ENCODE measurements at regions of chr1 and their contacts with region 1.

Region 1: GRCh38 chr1:11772458-11772857 is 10.5 kb downstream of the C1orf167 start:
- DNase-seq: no peak
- H3K4me3 ChIP-seq: no peak overlapping the region
- H3K27ac ChIP-seq: no peak overlapping the region
- H3K27me3 ChIP-seq: no peaks in the 10 kb centered on the region
- CTCF ChIP-seq: no peak

Region 2: GRCh38 chr1:11749996-11750395 is 22.5 kb before region 1 on chr1:
- intact Hi-C with region 1: loop called in 1 of 2 experiments (anchors 2 kb)
- DNase-seq: no peak
- H3K4me3 ChIP-seq: no peak overlapping the region
- H3K27ac ChIP-seq: no peak overlapping the region
- H3K27me3 ChIP-seq: no peaks in the 10 kb centered on the region
- CTCF ChIP-seq: no peak

Measured in dorsolateral prefrontal cortex (tissue), 120 donors.